Left colon (tissue), 2 donors: ENCODE measurements at regions of chr1 and their contacts with region 1.

Region 1: DNA sequence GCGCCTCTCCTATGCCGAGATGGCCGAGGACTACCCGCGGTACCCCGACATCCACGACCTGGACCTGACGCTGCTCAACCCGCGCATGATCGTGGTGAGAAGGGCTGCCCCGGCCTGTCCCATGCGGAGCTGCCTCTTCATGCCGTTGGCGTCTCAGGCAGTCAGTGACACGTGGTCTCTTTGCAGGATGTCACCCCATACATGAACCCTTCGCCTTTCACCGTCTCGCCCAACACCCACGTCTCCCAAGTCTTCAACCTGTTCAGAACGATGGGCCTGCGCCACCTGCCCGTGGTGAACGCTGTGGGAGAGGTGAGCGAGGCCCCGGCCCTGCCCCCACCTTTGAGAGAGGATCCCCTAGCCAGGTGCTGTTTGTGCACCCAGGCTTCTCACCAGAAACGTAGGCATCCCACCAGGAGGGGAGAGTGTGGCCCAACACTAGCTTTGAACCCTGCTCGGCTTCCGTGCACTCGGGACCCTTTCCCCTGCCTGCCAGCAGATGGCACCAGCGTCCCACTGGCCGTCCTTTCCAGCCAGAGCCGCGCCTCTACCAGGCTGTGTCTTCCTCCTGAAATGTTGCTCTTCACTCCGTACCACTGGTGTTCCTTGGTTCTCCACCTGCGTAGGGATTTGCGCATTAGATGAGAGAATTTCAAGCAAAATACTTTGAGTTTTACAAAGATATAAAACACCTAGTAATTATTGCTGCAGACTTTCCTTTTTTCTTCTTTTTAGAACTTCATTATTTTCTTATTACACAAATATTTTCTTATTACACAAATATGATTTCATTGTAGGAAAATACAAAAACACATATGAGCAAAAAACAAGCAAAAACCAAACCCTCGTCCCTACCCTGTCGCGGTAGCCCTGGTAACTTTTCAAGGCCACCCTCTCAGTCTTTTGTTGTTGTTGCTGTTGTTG is 9.0 kb downstream of the NPPA start:
- DNase-seq: peak; percentile 43 to 75
- ATAC-seq: peak; percentile 91

Region 2: GRCh38 chr1:11693024-11693590 is 145.5 kb before region 1 on chr1:
- intact Hi-C with region 1: no loop called
- DNase-seq: no peak
- ATAC-seq: no peak

Region 3: DNA sequence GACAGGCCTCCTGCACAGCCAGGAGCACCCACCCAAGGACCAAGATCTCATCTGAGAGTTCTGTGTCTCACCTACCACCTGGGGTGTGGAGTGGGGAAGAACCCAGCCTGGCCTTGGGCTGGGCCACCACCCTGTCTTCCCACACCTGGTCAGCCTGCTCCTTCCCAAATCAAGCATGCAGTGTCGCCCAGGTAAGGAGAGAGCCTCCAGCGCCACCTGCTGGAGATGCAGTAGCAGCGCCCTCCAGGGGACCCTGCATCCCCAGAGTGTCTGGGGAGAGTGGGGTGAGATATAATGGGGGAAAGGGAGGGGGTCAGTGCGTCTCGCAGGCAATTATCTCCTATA is 55.3 kb after region 1 on chr1:
- intact Hi-C with region 1: loop called in 1 of 2 experiments (anchors 10 kb)
- DNase-seq: peak; percentile 49 to 59
- ATAC-seq: peak; percentile 93

Region 4: GRCh38 chr1:11967028-11967547 is 128.5 kb after region 1 on chr1:
- intact Hi-C with region 1: loop called in 1 of 2 experiments (anchors 10 kb)
- DNase-seq: peak; percentile 46 to 62
- ATAC-seq: peak; percentile 94